B cell (primary cell): ENCODE measurements at regions of chr17 and their contacts with region 1.

Region 1: DNA sequence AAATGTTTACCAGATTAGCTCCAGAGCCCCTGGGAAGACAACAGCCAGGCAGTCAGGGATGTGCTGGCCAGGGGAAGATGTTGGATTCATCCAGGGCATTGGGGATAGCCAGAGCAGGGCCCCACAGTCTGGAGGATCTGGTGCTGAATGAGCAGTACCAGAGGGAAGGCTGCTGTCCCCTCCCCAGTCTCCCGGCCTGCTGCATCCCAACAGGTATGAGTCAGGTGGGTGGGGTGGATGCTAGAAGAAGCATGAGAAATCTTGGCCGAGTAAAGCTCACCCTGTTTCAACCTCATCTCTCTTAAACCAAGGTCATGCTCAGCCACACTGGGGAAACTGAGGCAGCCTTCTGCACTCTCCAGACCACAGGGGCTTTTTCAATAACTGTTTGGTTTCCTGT is 71.9 kb upstream of the SEC14L1 start:
- DNase-seq: no peak
- ATAC-seq: no peak
- H3K4me3 ChIP-seq: no peak overlapping the region
- H3K4me3 Mint-ChIP-seq: no peak overlapping the region
- H3K27ac ChIP-seq: no peak overlapping the region
- H3K27ac Mint-ChIP-seq: no peak overlapping the region
- H3K4me1 ChIP-seq: no peaks in the 10 kb centered on the region
- H3K4me1 Mint-ChIP-seq: peaks cover 2% of the 10 kb centered on the region
- H3K27me3 ChIP-seq: peaks cover 0 to 16% (median 3%) of the 10 kb centered on the region in 4 experiments
- H3K27me3 Mint-ChIP-seq: peaks cover 32% of the 10 kb centered on the region
- CTCF ChIP-seq: no peak

Region 2: GRCh38 chr17:76816590-76817135 is 252.3 kb before region 1 on chr17:
- CTCF ChIA-PET with region 1: interaction called, 5 read pairs
- POLR2A ChIA-PET with region 1: no interaction called
- intact Hi-C with region 1: loop called (anchors 1 kb)
- DNase-seq: peak; percentile 38
- ATAC-seq: no peak
- H3K4me3 ChIP-seq: no peak overlapping the region
- H3K4me3 Mint-ChIP-seq: no peak overlapping the region
- H3K27ac ChIP-seq: no peak overlapping the region
- H3K27ac Mint-ChIP-seq: no peak overlapping the region
- H3K4me1 ChIP-seq: peaks cover 0 to 8% of the 10 kb centered on the region in 2 donors
- H3K4me1 Mint-ChIP-seq: peaks cover 11% of the 10 kb centered on the region
- H3K27me3 ChIP-seq: peaks cover 0 to 3% (median 0%) of the 10 kb centered on the region in 4 experiments
- H3K27me3 Mint-ChIP-seq: peaks cover 24% of the 10 kb centered on the region
- CTCF ChIP-seq: peak; percentile 30

Region 3: DNA sequence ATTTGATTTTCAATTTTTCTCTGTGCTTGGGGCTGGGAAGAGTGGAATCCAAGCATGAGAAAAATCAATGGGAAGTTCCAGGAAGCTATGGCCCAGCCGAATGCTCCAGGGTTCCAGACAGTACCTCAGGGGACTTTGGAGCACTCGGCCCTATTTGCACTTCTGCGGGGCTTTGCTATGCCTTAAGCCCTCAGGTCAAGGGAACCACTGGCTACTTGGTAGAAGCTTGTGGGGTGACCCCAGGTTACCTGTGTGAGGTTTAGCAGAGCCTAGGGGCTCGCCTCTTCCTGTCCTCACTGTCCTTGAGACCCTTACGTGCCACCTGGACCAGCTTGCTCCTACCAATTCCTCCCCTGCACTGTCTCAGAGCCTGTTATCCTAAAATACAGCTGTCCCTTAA is 79.4 kb before region 1 on chr17:
- CTCF ChIA-PET with region 1: no interaction called
- POLR2A ChIA-PET with region 1: no interaction called
- intact Hi-C with region 1: no loop called
- DNase-seq: no peak
- ATAC-seq: no peak
- H3K4me3 ChIP-seq: no peak overlapping the region
- H3K4me3 Mint-ChIP-seq: no peak overlapping the region
- H3K27ac ChIP-seq: no peak overlapping the region
- H3K27ac Mint-ChIP-seq: no peak overlapping the region
- H3K4me1 ChIP-seq: peaks cover 15 to 20% of the 10 kb centered on the region in 2 donors
- H3K4me1 Mint-ChIP-seq: peaks cover 17% of the 10 kb centered on the region
- H3K27me3 ChIP-seq: peaks cover 0 to 12% (median 3%) of the 10 kb centered on the region in 4 experiments
- H3K27me3 Mint-ChIP-seq: peaks cover 20% of the 10 kb centered on the region
- CTCF ChIP-seq: no peak